Panc1 (cell line): ENCODE measurements at regions of chr16 and their contacts with region 1.

Region 1: GRCh38 chr16:46743238-46743719 is 4.9 kb downstream of the MYLK3 start:
- DNase-seq: no peak
- ATAC-seq: no peak
- H3K4me3 ChIP-seq: no peak overlapping the region
- H3K27ac ChIP-seq: no peak overlapping the region
- H3K4me1 ChIP-seq: no peaks in the 10 kb centered on the region; the same call in 1 of the 2 replicates
- H3K27me3 ChIP-seq: no peaks in the 10 kb centered on the region
- CTCF ChIP-seq: no peak

Region 2: GRCh38 chr16:46658925-46659324 is 84.4 kb before region 1 on chr16:
- CTCF ChIA-PET with region 1: no interaction called
- POLR2A ChIA-PET with region 1: interaction called, 10 read pairs
- in situ Hi-C with region 1: no loop called
- intact Hi-C with region 1: no loop called
- DNase-seq: no peak
- ATAC-seq: no peak
- H3K4me3 ChIP-seq: no peak overlapping the region
- H3K27ac ChIP-seq: no peak overlapping the region
- H3K4me1 ChIP-seq: no peaks in the 10 kb centered on the region
- H3K27me3 ChIP-seq: no peaks in the 10 kb centered on the region
- CTCF ChIP-seq: no peak

Region 3: DNA sequence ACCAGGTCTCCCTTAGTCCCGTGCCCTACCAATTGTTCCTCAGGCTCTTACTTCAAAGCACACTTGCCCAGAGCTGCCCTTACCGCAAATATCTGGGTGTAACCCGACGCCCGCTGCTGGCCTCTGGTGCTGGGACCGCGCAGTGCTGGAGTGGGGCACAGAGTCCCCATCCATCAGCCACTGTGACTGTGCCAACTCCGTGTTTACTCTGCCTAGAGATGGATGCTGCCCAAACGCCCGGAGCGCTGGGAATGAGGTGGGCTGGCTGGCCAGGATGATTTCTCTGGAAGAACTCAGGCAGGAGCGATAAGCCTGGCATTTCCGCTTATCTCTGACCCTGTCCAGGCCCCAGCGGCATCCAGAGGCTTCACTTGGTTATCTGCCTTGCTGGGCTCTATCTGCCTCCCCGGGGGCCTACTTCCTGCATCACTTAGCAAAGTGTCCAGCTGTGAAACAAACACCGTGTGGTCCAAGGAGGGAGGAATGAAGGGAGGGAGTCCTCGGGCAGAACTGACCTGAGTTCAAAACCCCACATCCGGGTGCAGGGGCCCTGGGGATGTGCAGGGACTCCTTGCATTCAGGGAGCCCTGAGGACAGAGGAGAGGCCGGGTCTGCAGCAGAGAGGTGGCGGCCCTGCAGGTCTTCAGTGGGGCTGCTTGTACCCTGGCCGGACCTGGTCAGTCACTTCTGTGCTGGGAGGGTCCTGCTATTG is 14.2 kb after region 1 on chr16:
- CTCF ChIA-PET with region 1: interaction called, 13 read pairs
- POLR2A ChIA-PET with region 1: no interaction called
- in situ Hi-C with region 1: no loop called
- intact Hi-C with region 1: no loop called
- DNase-seq: no peak
- ATAC-seq: 0 out of 2 replicates have a peak, but pooled peaks have one; percentile 26
- H3K4me3 ChIP-seq: no peak overlapping the region
- H3K27ac ChIP-seq: no peak overlapping the region
- H3K4me1 ChIP-seq: no peaks in the 10 kb centered on the region
- H3K27me3 ChIP-seq: no peaks in the 10 kb centered on the region
- CTCF ChIP-seq: no peak